ENCODE measurements at regions of chr14 and their contacts with region 1.

Region 1: GRCh38 chr14:73105050-73105449 is 31.3 kb upstream of the PSEN1 start:
- DNase-seq: no peak
- ATAC-seq: no peak
- H3K4me3 ChIP-seq: no peak overlapping the region
- H3K4me3 Mint-ChIP-seq: no peak overlapping the region
- H3K27ac ChIP-seq: no peak overlapping the region
- H3K27ac Mint-ChIP-seq: no peak overlapping the region
- H3K4me1 ChIP-seq: no peaks in the 10 kb centered on the region
- H3K4me1 Mint-ChIP-seq: peaks cover 3% of the 10 kb centered on the region
- H3K27me3 ChIP-seq: no peaks in the 10 kb centered on the region
- H3K27me3 Mint-ChIP-seq: no peaks in the 10 kb centered on the region
- CTCF ChIP-seq: no peak

Region 2: DNA sequence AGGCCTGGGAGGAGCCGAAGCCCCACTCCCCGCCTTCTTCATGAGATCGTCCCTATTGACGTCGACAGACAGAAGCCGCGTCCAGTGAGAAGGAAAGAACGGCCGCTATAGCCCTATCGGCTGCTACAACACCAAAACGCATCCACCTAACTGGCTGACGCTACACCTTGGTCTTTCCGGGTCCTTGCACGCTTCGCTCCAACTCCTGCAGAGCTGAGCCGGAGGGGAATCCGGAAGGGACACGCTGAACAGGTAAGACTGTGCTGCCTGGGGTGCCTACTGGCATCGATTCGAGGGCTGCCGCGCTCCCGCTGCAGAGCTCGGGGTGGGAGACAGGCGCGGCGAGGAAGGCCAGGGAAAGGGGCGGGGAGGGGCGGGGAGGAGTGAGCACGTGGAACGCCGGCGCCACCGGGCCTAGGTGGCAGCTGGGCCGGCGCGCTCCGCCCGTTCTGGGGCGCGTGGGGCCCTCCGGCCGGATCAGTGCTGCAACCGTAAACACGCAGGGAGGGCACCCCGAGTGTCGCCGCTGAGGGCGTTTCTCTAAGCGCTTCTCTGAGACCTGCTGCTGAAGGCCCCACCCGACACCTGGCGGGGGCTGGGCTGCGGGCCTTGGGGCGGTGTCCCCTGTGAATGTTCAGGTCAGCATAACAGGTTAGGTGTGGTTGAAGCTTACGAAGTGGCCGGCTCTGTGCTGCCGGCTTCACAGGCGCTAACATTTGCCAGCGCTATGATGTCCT is 178.6 kb before region 1 on chr14 and contains the start of gene DCAF4:
- CTCF ChIA-PET with region 1: no interaction called
- POLR2A ChIA-PET with region 1: no interaction called
- intact Hi-C with region 1: no loop called
- DNase-seq: peak; percentile 89 to 97 (median 93)
- ATAC-seq: peak; percentile 93
- H3K4me3 ChIP-seq: peak within 1 kb of the TSS; percentile 79 to 87
- H3K4me3 Mint-ChIP-seq: peak within 1 kb of the TSS; percentile 94
- H3K27ac ChIP-seq: peak within 1 kb of the TSS; percentile 67 to 76
- H3K27ac Mint-ChIP-seq: peak within 1 kb of the TSS; percentile 92
- H3K4me1 ChIP-seq: peaks cover 13% of the 10 kb centered on the region
- H3K4me1 Mint-ChIP-seq: peaks cover 15% of the 10 kb centered on the region
- H3K27me3 ChIP-seq: no peaks in the 10 kb centered on the region
- H3K27me3 Mint-ChIP-seq: peaks cover 2% of the 10 kb centered on the region
- CTCF ChIP-seq: no peak
- total RNA-seq, gene DCAF4: 21.9 to 26.6 TPM

Region 3: DNA sequence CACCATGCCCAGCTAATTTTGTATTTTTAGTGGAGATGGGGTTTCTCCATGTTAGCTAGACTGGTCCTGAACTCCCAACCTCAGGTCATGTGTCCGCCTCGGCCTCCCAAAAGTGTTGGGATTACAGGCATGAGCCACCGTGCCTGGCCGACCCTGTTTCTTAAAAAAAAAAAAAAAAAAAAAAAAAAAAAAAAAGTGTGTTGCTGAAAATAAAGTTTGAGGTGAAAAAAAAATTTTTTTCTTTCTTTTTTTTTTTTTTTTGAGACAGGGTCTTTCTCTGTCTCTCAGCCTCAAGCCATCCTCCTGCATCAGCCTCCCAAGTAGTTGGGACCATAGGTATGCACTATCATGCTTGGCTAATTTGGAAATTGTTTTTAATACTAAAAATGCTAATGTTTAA is 35.5 kb before region 1 on chr14:
- CTCF ChIA-PET with region 1: no interaction called
- POLR2A ChIA-PET with region 1: no interaction called
- intact Hi-C with region 1: loop called in 1 of 2 experiments (anchors 5 kb)
- DNase-seq: no peak
- ATAC-seq: no peak
- H3K4me3 ChIP-seq: no peak overlapping the region
- H3K4me3 Mint-ChIP-seq: no peak overlapping the region
- H3K27ac ChIP-seq: no peak overlapping the region
- H3K27ac Mint-ChIP-seq: no peak overlapping the region
- H3K4me1 ChIP-seq: peaks cover 13% of the 10 kb centered on the region
- H3K4me1 Mint-ChIP-seq: peaks cover 54% of the 10 kb centered on the region
- H3K27me3 ChIP-seq: no peaks in the 10 kb centered on the region
- H3K27me3 Mint-ChIP-seq: no peaks in the 10 kb centered on the region
- CTCF ChIP-seq: no peak

Region 4: DNA sequence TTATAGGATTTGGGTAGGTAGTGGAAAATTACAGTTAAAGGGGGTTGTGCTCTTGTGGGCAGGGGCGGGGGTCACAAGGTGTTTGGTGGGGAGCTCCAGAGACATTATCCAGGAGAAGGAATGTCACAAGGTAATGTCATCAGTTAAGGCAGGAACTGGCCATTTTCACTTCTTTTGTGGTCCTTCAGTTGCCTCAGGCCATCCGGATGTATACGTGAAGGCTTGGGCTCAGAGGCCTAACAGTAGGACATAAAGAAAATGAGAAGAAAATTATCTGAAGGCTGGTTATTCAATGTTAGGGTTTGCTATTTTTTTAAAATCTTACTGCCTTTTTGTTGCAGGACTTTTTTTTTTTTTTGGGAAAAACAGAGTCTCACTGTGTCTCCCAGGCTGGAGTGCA is 28.7 kb after region 1 on chr14:
- CTCF ChIA-PET with region 1: no interaction called
- POLR2A ChIA-PET with region 1: no interaction called
- intact Hi-C with region 1: no loop called
- DNase-seq: no peak
- ATAC-seq: no peak
- H3K4me3 ChIP-seq: no peak overlapping the region
- H3K4me3 Mint-ChIP-seq: no peak overlapping the region
- H3K27ac ChIP-seq: no peak overlapping the region
- H3K27ac Mint-ChIP-seq: no peak overlapping the region
- H3K4me1 ChIP-seq: peaks cover 14% of the 10 kb centered on the region
- H3K4me1 Mint-ChIP-seq: peaks cover 19% of the 10 kb centered on the region
- H3K27me3 ChIP-seq: no peaks in the 10 kb centered on the region
- H3K27me3 Mint-ChIP-seq: no peaks in the 10 kb centered on the region
- CTCF ChIP-seq: no peak

Region 5: GRCh38 chr14:73771848-73772638 is 667.0 kb after region 1 on chr14:
- CTCF ChIA-PET with region 1: no interaction called
- POLR2A ChIA-PET with region 1: no interaction called
- intact Hi-C with region 1: no loop called
- DNase-seq: peak in 7 of 9 experiments; percentile 45 to 86 (median 74)
- ATAC-seq: peak; percentile 75
- H3K4me3 ChIP-seq: peak overlapping the region; percentile 1 to 38
- H3K4me3 Mint-ChIP-seq: peak overlapping the region; percentile 66
- H3K27ac ChIP-seq: peak overlapping the region; percentile 41 to 77
- H3K27ac Mint-ChIP-seq: peak overlapping the region; percentile 94
- H3K4me1 ChIP-seq: peaks cover 70% of the 10 kb centered on the region
- H3K4me1 Mint-ChIP-seq: peaks cover 74% of the 10 kb centered on the region
- H3K27me3 ChIP-seq: no peaks in the 10 kb centered on the region
- H3K27me3 Mint-ChIP-seq: no peaks in the 10 kb centered on the region
- CTCF ChIP-seq: no peak